GM12878 (cell line): ENCODE measurements at regions of chr16 and their contacts with region 1.

Region 1: DNA sequence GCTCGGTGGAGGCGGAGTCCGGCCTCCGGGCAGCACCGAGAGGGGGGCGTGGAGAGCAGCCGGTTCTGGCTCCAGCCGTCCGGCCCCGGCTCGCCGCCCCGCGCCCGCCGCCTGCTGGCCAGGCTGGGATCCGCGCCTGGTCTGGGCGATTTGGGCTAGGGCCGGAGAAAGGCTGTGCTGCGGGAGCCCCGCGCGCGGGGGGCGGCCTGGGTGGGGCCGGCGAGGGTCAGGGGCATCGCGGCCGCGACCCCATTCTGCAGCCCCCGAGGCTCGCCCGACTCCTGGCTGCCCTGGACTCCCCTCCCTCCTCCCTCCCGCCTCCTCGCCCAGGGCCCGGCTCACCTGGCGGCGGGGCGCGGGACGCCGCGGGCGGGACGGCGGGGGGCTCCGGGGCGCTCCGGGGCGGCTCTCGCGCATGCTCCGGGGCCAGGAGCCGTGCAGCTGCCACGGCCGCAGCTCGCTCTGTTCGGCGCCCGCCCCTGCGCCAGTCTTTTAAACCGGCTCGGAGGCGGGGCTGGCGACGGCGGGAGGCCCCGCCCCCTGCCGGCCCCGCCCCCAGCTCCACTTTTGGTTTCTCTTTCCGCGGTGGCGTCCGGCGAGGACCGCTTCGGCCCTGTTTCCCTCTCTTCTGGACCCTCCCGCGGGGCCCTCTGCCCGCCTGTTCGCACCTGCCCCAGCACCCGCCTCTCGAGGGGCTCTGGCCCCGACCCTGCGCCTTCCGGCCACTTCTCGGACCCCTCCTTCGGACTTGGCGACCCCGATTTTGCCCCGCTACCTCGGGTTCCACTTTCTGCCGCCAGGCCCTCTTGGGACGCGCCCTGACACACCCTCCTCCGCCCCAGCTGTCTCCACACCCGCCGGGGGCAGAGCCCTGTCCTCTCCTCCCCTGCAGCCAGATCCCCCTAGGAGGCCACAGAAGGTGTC is at the start of gene SOCS1:
- DNase-seq: no peak
- ATAC-seq: peak; percentile 60
- H3K4me3 ChIP-seq: peak within 1 kb of the TSS; percentile 91
- H3K27ac ChIP-seq: peak within 1 kb of the TSS; percentile 91
- H3K4me1 ChIP-seq: peaks cover 43% of the 10 kb centered on the region
- H3K27me3 ChIP-seq: no peaks in the 10 kb centered on the region
- CTCF ChIP-seq: peak; percentile 72 to 79 (median 76); a peak in 5 of 6 replicates
- EP300 ChIP-seq: 0 out of 4 replicates have a peak, but pooled peaks of 1 of the 2 experiments have one; percentile 7
- POLR2A ChIP-seq: peak; percentile 92
- RAD21 ChIP-seq: peak; percentile 68
- polyA plus RNA-seq, gene SOCS1: 0.42 to 1.2 TPM

Region 2: DNA sequence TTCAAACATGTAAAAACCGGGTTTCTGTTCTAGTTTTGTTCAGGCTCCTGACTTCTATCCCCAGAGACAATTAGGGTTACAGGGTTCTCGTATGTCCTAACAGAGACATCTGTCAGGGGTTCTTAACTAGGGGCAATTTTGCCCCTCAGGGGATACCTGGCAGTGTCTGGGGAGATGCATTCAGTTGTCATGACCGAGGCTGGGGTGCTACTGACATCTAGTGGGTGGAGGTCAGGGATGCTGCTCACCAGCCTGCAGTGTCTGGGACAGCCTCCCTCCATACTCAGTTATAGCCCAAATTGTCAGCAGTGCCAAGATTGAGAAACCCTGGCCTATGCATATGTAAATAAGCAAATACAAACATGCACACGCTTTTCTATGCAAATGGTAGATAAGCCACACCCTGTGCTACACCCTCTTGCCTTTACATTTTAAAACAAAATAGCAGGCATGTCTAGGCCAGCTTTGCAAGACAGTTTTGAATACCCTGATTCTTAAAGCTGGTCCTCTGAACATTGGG is 274.2 kb before region 1 on chr16:
- CTCF ChIA-PET with region 1: interaction called, 50 read pairs
- POLR2A ChIA-PET with region 1: interaction called, 9 read pairs
- RAD21 ChIA-PET with region 1: interaction called, 37 read pairs
- SMC1A ChIA-PET with region 1: interaction called, 20 read pairs
- in situ Hi-C with region 1: no loop called
- intact Hi-C with region 1: loop called (anchors 5 kb)
- DNase-seq: no peak
- ATAC-seq: peak; percentile 94
- H3K4me3 ChIP-seq: no peak overlapping the region
- H3K27ac ChIP-seq: peak overlapping the region; percentile 55; the same call in 1 of the 2 replicates
- H3K4me1 ChIP-seq: peaks cover 20% of the 10 kb centered on the region
- H3K27me3 ChIP-seq: no peaks in the 10 kb centered on the region
- CTCF ChIP-seq: peak; percentile 78 to 85 (median 80)
- EP300 ChIP-seq: peak in 1 of 2 experiments; percentile 64; a peak in 1 of 4 replicates
- POLR2A ChIP-seq: no peak
- RAD21 ChIP-seq: peak; percentile 54

Region 3: DNA sequence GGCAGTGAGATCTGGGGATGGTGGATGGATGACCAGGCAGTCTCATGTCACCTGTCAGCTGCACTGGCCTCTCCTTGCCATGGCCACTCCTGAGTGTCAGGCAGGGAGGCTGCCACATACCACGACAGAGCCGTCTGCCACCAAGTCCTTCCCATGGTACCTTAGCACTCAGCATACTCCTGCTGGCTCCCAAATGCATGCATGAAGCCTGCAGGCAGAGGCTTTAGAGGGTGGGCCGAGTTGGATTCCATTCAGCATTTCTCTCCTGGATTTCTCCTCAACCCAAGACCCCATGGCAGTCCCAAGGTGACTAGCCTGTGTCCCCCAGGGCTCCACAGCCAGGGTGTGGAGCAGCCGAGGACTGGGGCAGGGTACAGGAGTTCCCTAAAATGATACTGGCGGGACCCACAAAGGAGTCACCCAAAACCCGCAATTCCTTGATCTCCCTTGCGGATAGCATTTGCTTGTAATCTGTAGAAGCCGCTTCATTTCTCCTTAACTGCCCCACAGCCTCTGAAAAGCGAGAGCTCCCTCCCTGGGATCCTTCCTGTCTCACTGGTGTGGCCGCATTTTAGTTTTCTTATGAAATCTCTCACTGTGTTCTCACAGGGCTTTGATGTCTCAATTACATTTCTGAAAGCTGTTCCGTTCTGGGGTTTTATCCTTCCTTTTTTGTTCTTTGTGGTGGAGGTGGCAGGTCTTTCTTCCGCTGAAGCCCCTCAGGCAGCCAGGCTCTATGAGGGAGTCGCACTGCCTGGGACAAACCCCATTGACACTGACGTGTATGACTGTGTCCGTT is 141.4 kb before region 1 on chr16:
- CTCF ChIA-PET with region 1: interaction called, 3 read pairs
- POLR2A ChIA-PET with region 1: interaction called, 4 read pairs
- RAD21 ChIA-PET with region 1: interaction called, 14 read pairs
- SMC1A ChIA-PET with region 1: interaction called, 4 read pairs
- in situ Hi-C with region 1: no loop called
- intact Hi-C with region 1: no loop called
- DNase-seq: no peak
- ATAC-seq: no peak
- H3K4me3 ChIP-seq: no peak overlapping the region
- H3K27ac ChIP-seq: peak overlapping the region; percentile 52
- H3K4me1 ChIP-seq: peaks cover 39% of the 10 kb centered on the region
- H3K27me3 ChIP-seq: no peaks in the 10 kb centered on the region
- CTCF ChIP-seq: no peak
- EP300 ChIP-seq: no peak
- POLR2A ChIP-seq: no peak
- RAD21 ChIP-seq: no peak

Region 4: GRCh38 chr16:11224096-11224893 is 31.7 kb before region 1 on chr16:
- CTCF ChIA-PET with region 1: interaction called, 29 read pairs
- POLR2A ChIA-PET with region 1: interaction called, 53 read pairs
- RAD21 ChIA-PET with region 1: interaction called, 76 read pairs
- SMC1A ChIA-PET with region 1: interaction called, 23 read pairs
- in situ Hi-C with region 1: no loop called
- intact Hi-C with region 1: loop called (anchors 2 kb)
- DNase-seq: peak; percentile 57
- ATAC-seq: peak; percentile 75
- H3K4me3 ChIP-seq: peak overlapping the region; percentile 19; the same call in 1 of the 2 replicates
- H3K27ac ChIP-seq: peak overlapping the region; percentile 94
- H3K4me1 ChIP-seq: peaks cover 28% of the 10 kb centered on the region
- H3K27me3 ChIP-seq: no peaks in the 10 kb centered on the region
- CTCF ChIP-seq: no peak
- EP300 ChIP-seq: no peak
- POLR2A ChIP-seq: peak; percentile 55
- RAD21 ChIP-seq: no peak

Region 5: GRCh38 chr16:11297492-11298142 is 41.6 kb after region 1 on chr16:
- CTCF ChIA-PET with region 1: interaction called, 104 read pairs
- POLR2A ChIA-PET with region 1: interaction called, 80 read pairs
- RAD21 ChIA-PET with region 1: interaction called, 123 read pairs
- SMC1A ChIA-PET with region 1: interaction called, 108 read pairs
- in situ Hi-C with region 1: no loop called
- intact Hi-C with region 1: loop called (anchors 1 kb)
- DNase-seq: peak; percentile 92
- ATAC-seq: peak; percentile 91
- H3K4me3 ChIP-seq: peak overlapping the region; percentile 30; the same call in 1 of the 2 replicates
- H3K27ac ChIP-seq: peak overlapping the region; percentile 91
- H3K4me1 ChIP-seq: peaks cover 57% of the 10 kb centered on the region
- H3K27me3 ChIP-seq: no peaks in the 10 kb centered on the region
- CTCF ChIP-seq: peak in 1 of 3 experiments; percentile 26; a peak in 2 of 6 replicates
- EP300 ChIP-seq: peak; percentile 86 to 94
- POLR2A ChIP-seq: peak; percentile 58
- RAD21 ChIP-seq: 0 out of 2 replicates have a peak, but pooled peaks have one; percentile 13

Region 6: GRCh38 chr16:11361701-11362451 is 105.9 kb after region 1 on chr16:
- CTCF ChIA-PET with region 1: interaction called, 170 read pairs
- POLR2A ChIA-PET with region 1: interaction called, 9 read pairs
- RAD21 ChIA-PET with region 1: interaction called, 243 read pairs
- SMC1A ChIA-PET with region 1: interaction called, 31 read pairs
- in situ Hi-C with region 1: no loop called
- intact Hi-C with region 1: no loop called
- DNase-seq: peak; percentile 45
- ATAC-seq: peak; percentile 65
- H3K4me3 ChIP-seq: peak overlapping the region; percentile 38; the same call in 1 of the 2 replicates
- H3K27ac ChIP-seq: peak overlapping the region; percentile 5; the same call in 1 of the 2 replicates
- H3K4me1 ChIP-seq: peaks cover 28% of the 10 kb centered on the region
- H3K27me3 ChIP-seq: no peaks in the 10 kb centered on the region
- CTCF ChIP-seq: no peak
- EP300 ChIP-seq: peak in 1 of 2 experiments; percentile 70; a peak in 2 of 4 replicates
- POLR2A ChIP-seq: no peak
- RAD21 ChIP-seq: 0 out of 2 replicates have a peak, but pooled peaks have one; percentile 24

Region 7: GRCh38 chr16:11446566-11447119 is 190.6 kb after region 1 on chr16:
- CTCF ChIA-PET with region 1: no interaction called
- POLR2A ChIA-PET with region 1: no interaction called
- RAD21 ChIA-PET with region 1: no interaction called
- SMC1A ChIA-PET with region 1: no interaction called
- in situ Hi-C with region 1: no loop called
- intact Hi-C with region 1: no loop called
- DNase-seq: no peak
- ATAC-seq: no peak
- H3K4me3 ChIP-seq: no peak overlapping the region
- H3K27ac ChIP-seq: no peak overlapping the region
- H3K4me1 ChIP-seq: no peaks in the 10 kb centered on the region
- H3K27me3 ChIP-seq: no peaks in the 10 kb centered on the region
- CTCF ChIP-seq: no peak
- EP300 ChIP-seq: no peak
- POLR2A ChIP-seq: no peak
- RAD21 ChIP-seq: no peak